ENCODE measurements at regions of chr3 and their contacts with region 1.

Region 1: GRCh38 chr3:48561045-48561736 is 2.4 kb downstream of the UCN2 start:
- DNase-seq: peak; percentile 57 to 74
- ATAC-seq: peak; percentile 12 to 15 (median 14)
- H3K4me3 ChIP-seq: peak overlapping the region; percentile 60
- H3K27ac ChIP-seq: peak overlapping the region; percentile 72
- H3K4me1 ChIP-seq: peaks cover 33% of the 10 kb centered on the region
- H3K27me3 ChIP-seq: no peaks in the 10 kb centered on the region
- CTCF ChIP-seq: no peak

Region 2: GRCh38 chr3:48592282-48593087 is 31.3 kb after region 1 on chr3:
- intact Hi-C with region 1: loop called in 1 of 2 experiments (anchors 2 kb)
- DNase-seq: no peak
- ATAC-seq: peak in 1 of 4 donors; percentile 31
- H3K4me3 ChIP-seq: no peak overlapping the region
- H3K27ac ChIP-seq: no peak overlapping the region
- H3K4me1 ChIP-seq: peaks cover 32% of the 10 kb centered on the region
- H3K27me3 ChIP-seq: no peaks in the 10 kb centered on the region
- CTCF ChIP-seq: no peak

Region 3: DNA sequence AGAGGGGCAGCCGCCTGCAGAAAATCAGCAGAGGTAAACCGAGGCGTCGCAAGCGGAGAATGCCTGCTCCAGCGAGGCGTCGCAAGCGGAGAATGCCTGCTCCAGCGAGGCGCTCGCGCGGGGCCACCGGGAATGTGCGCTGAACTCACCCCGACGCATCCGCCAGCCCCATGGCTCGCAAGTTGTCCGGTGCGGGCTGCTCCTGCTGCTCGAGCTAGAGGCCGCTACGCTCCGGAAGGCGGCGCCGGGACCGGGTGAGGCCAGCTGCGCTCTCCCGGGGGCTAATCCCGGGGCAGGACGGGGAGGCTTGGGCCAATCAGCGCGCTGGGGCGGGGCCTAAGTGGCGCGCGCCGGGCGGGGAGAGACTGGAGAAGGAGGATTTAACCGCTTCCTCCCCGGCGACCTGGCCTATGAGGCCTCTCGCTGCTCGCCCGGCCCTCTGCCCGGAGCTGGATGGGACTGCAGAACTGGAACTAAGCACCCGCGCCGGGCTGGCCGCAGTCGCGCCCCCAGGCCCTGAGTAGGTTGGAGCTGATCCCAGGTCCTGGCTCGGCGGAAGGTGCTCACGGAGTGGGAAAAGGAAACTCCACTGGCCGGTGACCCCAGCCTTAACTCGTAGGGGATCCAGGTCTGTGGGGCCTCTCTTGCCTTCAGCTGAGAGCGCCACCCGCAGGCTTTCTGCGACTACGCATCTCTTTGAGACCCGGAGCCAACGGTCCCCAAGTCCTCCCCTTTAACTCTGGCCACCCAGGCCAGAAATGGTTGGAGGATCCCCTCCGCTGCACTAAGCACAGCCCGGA is 74.2 kb after region 1 on chr3 and contains the start of gene SLC26A6:
- intact Hi-C with region 1: loop called in 1 of 2 experiments (anchors 2 kb)
- DNase-seq: peak; percentile 98
- ATAC-seq: peak; percentile 97 to 99 (median 98)
- H3K4me3 ChIP-seq: peak within 1 kb of the TSS; percentile 92
- H3K27ac ChIP-seq: peak within 1 kb of the TSS; percentile 79
- H3K4me1 ChIP-seq: peaks cover 19% of the 10 kb centered on the region
- H3K27me3 ChIP-seq: no peaks in the 10 kb centered on the region
- CTCF ChIP-seq: peak; percentile 23
- total RNA-seq, gene SLC26A6: 5.6 to 13.0 (median 6.6) TPM

Region 4: DNA sequence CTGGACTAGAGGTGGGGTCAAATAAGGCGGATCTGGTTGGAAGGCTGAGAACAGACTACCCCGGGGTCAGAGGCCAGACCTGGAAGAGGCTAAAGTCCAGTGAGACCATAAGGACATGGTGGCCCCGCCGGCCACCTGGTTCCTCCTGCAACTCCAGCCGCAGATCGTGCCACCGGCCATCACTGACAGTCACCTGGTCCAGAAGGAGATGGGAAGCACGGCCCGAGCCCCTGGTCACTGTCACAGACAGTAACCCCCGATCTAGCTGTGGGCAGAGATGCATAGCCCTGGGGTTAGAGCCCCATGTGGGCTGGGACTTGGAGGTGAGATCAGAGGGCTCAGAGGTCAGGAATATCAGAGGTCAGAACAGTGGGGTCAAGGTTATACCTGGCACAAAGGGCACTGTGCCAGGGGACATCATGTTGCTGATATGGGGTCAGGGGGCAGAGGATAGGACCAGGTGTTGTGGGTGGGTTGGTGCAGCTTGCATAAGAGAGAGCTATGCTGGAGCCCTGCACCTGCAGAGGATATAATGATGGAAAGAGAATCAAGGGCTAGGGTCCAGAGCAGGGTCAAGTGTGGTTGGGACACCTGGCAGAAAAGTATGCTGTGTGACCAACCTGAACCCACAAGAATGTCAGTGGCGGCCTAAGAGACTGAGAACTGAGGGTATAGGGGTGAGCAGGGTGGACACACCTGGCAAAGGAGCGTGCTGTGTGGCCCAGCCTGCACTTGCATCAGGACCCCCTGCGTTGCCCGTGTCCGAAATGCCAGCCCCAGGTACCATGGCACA is 91.9 kb after region 1 on chr3:
- intact Hi-C with region 1: loop called in 1 of 2 experiments (anchors 5 kb)
- DNase-seq: no peak
- ATAC-seq: no peak
- H3K4me3 ChIP-seq: no peak overlapping the region
- H3K27ac ChIP-seq: no peak overlapping the region
- H3K4me1 ChIP-seq: no peaks in the 10 kb centered on the region
- H3K27me3 ChIP-seq: peaks cover 0 to 2% (median 0%) of the 10 kb centered on the region in 3 donors
- CTCF ChIP-seq: no peak